Activated CD4-positive, alpha-beta T cell treated with anti-CD3 and anti-CD28 coated beads, Interleukin-2, amount 10 ng/mL, durations not matched to agents 24 days and 14 days (primary cell): ENCODE measurements at regions of chr11 and their contacts with region 1.

Region 1: DNA sequence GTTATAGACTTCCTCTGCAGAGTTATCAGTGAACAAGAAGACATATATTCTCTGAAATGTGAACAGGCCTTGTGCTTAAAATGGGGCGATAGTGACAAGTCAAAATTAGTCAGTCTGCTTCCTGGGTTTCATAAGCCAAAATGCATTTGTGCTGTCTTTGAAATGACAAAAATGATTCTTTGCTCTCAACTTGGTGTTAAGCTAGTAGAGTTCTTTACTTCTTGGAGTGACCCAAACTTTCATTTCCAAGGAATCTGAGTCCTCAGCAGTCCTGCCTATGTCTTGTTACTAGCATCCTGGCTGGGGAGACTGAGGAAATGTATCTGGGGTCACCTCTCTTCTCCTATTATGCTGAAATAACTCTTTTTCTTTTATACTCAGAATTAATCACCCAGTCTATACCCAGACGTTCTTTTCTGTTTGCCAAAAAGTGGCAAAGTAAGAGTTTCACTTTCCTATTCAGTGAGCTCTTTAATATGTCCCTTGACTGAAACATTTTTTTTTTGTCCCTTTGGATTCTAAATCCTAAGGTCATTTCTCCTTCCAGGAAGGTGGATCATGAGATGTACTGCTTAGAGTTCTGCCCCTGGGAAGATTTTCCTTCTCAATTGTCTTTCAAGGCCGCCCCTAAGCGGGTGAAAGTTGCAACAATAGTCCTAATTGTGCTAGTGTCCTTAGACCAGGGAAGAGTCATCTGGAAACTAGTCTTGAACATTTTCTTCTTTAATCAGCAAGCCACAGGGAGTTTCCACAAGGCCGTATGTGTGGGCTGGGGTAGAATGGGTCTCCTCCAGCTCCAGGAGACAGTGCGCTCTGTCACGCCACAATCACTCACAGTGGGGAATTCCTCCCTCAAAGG is 53.0 kb upstream of the RDX start:
- DNase-seq: peak; percentile 88
- H3K4me3 Mint-ChIP-seq: peak overlapping the region; percentile 78
- H3K27ac Mint-ChIP-seq: peak overlapping the region; percentile 99
- H3K4me1 Mint-ChIP-seq: peaks cover 65% of the 10 kb centered on the region
- H3K27me3 Mint-ChIP-seq: no peaks in the 10 kb centered on the region

Region 2: DNA sequence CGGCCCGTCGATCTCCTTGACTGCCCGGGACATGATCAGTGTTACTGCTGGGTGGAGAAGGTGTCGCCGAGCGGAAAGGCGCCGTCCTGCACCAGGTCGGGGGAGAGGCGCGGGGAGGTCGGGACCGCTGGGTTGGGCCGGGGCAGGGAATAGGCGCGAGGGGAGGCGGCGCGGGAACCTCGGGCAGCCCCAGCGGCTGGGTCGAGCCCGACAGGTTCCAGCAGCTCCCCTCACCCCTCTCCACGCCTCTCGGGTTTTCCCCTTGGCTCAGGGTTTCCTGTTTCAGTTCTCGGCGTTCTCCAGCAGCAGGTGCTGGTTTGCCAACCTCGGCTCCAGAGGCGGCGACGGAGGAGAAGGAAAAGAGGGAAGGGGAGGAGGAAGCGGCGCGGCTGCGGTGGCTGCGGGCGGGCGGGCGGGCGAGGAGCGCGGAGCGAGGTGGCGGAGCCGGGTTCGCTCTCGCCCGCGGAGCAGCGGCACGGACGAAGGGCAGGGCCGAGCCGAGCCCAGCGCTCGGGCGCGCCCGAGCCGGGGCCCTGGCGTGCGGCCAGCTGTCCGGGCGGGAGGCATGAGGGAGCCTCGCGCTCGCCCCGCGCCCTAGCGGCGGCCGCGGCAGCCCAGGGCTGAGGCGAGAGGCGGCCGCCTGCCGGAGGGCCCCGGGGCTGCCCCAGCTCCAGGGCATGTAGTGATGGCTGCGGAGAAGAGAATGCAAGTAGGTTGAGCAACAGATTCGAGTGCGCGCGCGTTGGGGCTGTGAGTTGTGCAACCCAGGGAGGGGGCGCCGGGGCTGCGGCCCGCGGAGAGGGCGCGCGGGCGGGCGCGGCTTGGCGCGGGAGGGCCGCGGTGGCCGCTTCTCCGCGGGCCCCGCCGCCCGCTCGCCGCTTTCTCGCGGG is 256.6 kb before region 1 on chr11 and contains the start of gene ZC3H12C:
- intact Hi-C with region 1: loop called (anchors 2 kb)
- DNase-seq: peak; percentile 86
- H3K4me3 Mint-ChIP-seq: peak within 1 kb of the TSS; percentile 88
- H3K27ac Mint-ChIP-seq: peak within 1 kb of the TSS; percentile 95
- H3K4me1 Mint-ChIP-seq: peaks cover 18% of the 10 kb centered on the region
- H3K27me3 Mint-ChIP-seq: peaks cover 53% of the 10 kb centered on the region
- total RNA-seq, gene ZC3H12C: 6.7 and 7.5 TPM in 2 replicates

Region 3: DNA sequence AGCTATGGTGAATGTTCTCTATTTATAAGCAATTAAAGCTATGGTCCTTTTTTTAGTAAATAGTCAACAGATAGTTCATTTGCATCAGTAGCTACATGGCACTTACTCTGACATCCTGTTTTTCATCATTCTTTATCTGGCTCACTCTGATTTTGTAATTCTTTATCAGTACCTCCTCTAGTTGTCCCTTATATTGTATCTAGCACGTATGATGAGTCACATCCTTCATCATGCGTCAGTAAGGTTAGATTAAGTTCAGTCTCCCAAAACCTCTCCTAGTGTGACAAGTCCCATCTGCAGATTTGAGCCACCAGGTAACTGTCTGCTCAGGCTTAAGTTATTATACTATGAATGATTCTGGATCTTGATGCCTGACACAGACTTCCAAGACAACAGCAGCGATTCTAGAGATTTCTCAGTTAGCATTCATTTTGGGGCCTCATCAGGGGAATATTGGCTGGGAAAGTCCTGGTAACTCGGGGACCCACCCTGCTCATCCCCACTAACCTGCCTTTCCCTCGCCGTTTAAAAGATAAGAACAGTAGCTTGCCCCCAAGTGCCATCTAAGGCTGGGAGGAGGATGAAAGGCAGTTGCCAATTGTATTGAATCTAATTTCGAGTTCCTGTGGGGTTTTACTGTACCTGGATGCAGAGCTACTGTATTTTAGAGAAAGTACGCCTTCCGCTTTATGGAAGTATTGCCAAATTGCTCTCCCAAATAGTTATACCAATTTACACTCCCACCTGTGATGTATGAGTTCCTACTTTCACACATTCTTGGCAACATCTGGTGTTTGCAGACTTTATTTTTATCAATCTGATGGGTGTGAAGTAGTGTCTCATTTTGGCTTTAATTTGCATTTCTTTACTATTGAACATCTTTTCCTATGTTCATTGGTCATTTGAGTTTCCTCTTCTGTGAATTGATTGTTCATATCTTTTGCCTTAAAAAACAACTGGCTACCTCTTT is 200.3 kb before region 1 on chr11:
- intact Hi-C with region 1: no loop called
- DNase-seq: no peak
- H3K4me3 Mint-ChIP-seq: no peak overlapping the region
- H3K27ac Mint-ChIP-seq: no peak overlapping the region
- H3K4me1 Mint-ChIP-seq: no peaks in the 10 kb centered on the region
- H3K27me3 Mint-ChIP-seq: peaks cover 27% of the 10 kb centered on the region

Region 4: DNA sequence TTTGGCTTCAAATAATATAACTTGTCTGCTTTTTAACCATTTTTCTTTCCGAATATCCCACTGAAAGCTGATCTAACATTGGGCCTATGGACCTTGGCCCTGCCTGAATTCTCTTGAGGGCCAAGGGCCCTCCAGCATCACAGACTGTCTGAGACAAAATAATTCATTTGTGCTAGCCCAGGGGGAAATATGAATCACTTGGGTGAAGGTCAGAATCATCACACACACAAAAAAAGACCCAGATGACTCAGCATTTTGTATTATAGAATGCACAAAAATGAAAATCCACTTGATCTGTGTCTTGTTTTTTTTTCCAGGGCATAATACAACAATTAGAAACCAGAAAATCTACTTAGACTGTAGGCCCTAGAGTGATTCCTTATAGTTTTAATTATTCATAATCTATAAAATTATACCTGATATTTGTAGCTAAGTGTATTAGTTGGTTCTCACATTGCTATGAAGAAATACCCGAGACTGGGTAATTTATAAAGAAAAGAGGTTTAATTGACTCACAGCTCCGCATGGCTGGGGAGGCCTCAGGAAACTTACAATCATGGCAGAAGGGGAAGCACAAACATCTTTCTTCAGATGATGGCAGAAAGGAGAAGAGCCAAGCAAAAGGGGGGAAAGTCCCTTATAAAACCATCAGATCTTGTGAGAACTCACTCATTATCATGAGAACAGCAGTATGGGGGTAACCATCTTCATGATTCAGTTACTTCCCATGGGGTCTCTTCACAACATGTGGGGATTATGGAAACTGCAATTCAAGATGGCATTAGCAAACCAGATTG is 37.4 kb before region 1 on chr11:
- intact Hi-C with region 1: loop called (anchors 1 kb)
- DNase-seq: no peak
- H3K4me3 Mint-ChIP-seq: no peak overlapping the region
- H3K27ac Mint-ChIP-seq: peak overlapping the region; percentile 82
- H3K4me1 Mint-ChIP-seq: peaks cover 8% of the 10 kb centered on the region
- H3K27me3 Mint-ChIP-seq: no peaks in the 10 kb centered on the region

Region 5: DNA sequence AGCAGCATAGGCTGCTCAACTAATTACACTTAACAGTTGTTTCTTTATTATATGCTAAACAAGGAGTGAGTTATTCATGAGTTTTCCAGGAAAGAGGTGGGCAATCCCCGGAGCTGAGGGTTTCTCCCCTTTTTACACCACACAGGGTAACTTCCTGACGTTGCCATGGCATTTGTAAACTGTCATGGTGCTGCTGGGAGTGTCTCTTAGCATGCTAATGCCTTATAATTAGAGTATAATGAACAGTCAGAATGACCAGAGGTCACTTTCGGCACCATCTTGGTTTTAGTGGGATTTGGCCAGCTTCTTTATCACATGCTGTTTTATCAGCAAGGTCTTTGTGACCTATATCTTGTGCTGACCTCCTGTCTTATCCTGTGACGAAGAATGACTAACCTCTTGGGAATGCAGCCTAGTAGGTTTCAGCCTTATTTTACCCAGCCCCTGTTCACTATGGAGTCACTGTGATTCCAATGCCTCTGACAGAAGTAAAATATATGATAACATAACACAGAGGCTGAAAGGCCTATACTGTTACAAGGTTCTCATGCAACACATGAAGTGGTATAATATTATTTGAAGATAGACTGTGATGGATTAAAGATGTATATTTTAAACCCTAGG is 11.7 kb before region 1 on chr11:
- intact Hi-C with region 1: loop called (anchors 1 kb)
- DNase-seq: peak; percentile 80
- H3K4me3 Mint-ChIP-seq: no peak overlapping the region
- H3K27ac Mint-ChIP-seq: peak overlapping the region; percentile 52
- H3K4me1 Mint-ChIP-seq: peaks cover 23% of the 10 kb centered on the region
- H3K27me3 Mint-ChIP-seq: no peaks in the 10 kb centered on the region

Region 6: DNA sequence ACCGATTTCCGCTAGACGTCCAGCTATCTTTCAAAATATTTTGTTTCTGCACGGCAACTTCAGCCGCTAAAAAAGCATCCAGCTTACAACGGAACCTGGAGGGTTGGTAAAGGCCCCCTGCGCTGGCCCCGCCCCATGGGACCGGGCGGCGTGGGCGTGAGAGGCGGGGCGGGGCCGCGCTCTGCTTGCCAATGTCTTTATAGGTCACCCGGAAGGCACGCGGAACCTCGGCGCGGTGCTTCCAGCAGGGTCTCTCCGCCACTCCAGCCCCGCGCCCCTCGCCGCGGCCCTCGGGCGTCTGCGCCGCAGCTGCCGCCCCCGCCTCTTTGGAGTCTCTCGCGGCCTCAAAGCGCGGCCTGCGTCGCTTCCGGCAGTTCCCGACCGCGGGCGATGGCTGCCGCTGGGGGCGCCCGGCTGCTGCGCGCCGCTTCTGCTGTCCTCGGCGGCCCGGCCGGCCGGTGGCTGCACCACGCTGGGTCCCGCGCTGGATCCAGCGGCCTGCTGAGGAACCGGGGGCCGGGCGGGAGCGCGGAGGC is 80.4 kb after region 1 on chr11 and contains the start of gene FDX1:
- intact Hi-C with region 1: loop called (anchors 1 kb)
- DNase-seq: peak; percentile 95
- H3K4me3 Mint-ChIP-seq: peak within 1 kb of the TSS; percentile 99
- H3K27ac Mint-ChIP-seq: peak within 1 kb of the TSS; percentile 98
- H3K4me1 Mint-ChIP-seq: peaks cover 39% of the 10 kb centered on the region
- H3K27me3 Mint-ChIP-seq: no peaks in the 10 kb centered on the region
- total RNA-seq, gene FDX1: 14.2 and 16.4 TPM in 2 replicates

Region 7: DNA sequence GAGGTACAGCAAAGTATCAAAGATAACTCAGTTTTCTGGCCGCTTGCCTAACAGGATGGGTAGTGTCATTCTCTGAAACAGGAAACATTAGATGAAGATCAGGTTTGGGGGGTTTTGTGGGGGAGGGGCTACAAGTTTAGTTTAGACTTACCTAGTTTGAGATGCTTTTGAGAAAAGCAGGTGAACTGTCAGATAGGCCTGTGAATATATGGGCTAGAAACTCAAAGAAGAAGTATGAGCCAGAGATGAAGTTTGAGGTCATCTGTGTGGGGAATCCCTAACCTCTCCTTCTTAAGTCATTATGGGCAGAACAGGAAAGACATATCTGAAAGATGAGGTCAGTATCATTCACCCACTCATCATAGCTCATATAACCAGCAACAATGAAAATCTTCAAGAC is 1177.1 kb after region 1 on chr11:
- intact Hi-C with region 1: loop called (anchors 10 kb)
- DNase-seq: no peak
- H3K4me3 Mint-ChIP-seq: peak overlapping the region; percentile 30
- H3K27ac Mint-ChIP-seq: peak overlapping the region; percentile 59
- H3K4me1 Mint-ChIP-seq: peaks cover 40% of the 10 kb centered on the region
- H3K27me3 Mint-ChIP-seq: no peaks in the 10 kb centered on the region